IMR-90 (cell line): ENCODE measurements at regions of chr15 and their contacts with region 1.

Region 1: GRCh38 chr15:48748535-48748934 is 62.3 kb downstream of the CEP152 start:
- DNase-seq: peak; percentile 64
- ATAC-seq: peak; percentile 59
- H3K4me3 ChIP-seq: no peak overlapping the region
- H3K27ac ChIP-seq: no peak overlapping the region
- H3K4me1 ChIP-seq: peaks cover 5% of the 10 kb centered on the region; the same call in 1 of the 2 replicates
- H3K27me3 ChIP-seq: no peaks in the 10 kb centered on the region
- CTCF ChIP-seq: no peak
- POLR2A ChIP-seq: no peak
- RAD21 ChIP-seq: no peak

Region 2: DNA sequence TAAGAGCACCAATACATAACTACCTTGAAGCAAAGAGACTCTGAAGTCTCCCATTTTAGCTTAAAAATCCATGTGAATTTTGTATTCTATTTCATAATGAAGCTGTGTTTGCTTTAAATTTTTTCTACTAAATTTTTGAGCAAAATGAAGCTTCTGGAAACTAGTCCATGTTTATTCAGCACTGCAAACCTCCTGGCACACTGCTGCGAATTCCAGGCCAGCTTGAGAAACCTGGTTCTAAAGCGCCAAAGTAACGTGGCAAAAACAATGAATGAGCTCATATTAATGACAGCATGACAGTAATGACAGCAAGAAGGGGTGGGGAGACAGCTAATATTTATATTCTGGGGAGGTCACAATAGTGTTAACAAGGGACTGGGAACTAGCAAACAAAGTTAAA is 36.7 kb after region 1 on chr15:
- CTCF ChIA-PET with region 1: no interaction called
- POLR2A ChIA-PET with region 1: no interaction called
- dilution Hi-C with region 1: no loop called
- in situ Hi-C with region 1: no loop called
- intact Hi-C with region 1: loop called (anchors 5 kb)
- DNase-seq: no peak
- ATAC-seq: no peak
- H3K4me3 ChIP-seq: no peak overlapping the region
- H3K27ac ChIP-seq: no peak overlapping the region
- H3K4me1 ChIP-seq: peaks cover 2% of the 10 kb centered on the region; the same call in 1 of the 2 replicates
- H3K27me3 ChIP-seq: no peaks in the 10 kb centered on the region
- CTCF ChIP-seq: no peak
- POLR2A ChIP-seq: no peak
- RAD21 ChIP-seq: no peak